ENCODE measurements at regions of chr3 and their contacts with region 1.

Region 1: DNA sequence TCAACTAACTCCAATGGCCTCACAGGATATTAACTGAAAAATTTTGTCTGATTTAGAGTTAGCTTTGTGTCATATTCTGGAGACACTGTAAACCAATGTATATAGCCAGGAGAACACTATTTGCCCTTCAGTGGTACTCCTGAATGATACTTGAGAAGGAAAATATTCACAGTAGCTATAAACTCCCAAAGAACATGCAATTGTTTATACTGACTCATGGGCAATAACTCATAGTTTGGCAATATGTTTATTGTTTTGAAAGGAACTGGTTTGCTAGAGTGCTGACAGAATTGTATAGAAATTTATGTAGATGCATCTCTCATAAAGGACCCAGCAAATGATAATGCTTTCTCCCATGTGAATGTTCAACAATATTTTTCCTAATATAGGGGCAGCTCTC is 537.6 kb downstream of the PLOD2 start:
- DNase-seq: no peak
- ATAC-seq: no peak
- H3K4me3 ChIP-seq: no peak overlapping the region
- H3K4me3 Mint-ChIP-seq: no peak overlapping the region
- H3K27ac ChIP-seq: no peak overlapping the region
- H3K27ac Mint-ChIP-seq: no peak overlapping the region
- H3K4me1 ChIP-seq: no peaks in the 10 kb centered on the region
- H3K4me1 Mint-ChIP-seq: no peaks in the 10 kb centered on the region
- H3K27me3 ChIP-seq: no peaks in the 10 kb centered on the region
- H3K27me3 Mint-ChIP-seq: no peaks in the 10 kb centered on the region
- CTCF ChIP-seq: no peak

Region 2: DNA sequence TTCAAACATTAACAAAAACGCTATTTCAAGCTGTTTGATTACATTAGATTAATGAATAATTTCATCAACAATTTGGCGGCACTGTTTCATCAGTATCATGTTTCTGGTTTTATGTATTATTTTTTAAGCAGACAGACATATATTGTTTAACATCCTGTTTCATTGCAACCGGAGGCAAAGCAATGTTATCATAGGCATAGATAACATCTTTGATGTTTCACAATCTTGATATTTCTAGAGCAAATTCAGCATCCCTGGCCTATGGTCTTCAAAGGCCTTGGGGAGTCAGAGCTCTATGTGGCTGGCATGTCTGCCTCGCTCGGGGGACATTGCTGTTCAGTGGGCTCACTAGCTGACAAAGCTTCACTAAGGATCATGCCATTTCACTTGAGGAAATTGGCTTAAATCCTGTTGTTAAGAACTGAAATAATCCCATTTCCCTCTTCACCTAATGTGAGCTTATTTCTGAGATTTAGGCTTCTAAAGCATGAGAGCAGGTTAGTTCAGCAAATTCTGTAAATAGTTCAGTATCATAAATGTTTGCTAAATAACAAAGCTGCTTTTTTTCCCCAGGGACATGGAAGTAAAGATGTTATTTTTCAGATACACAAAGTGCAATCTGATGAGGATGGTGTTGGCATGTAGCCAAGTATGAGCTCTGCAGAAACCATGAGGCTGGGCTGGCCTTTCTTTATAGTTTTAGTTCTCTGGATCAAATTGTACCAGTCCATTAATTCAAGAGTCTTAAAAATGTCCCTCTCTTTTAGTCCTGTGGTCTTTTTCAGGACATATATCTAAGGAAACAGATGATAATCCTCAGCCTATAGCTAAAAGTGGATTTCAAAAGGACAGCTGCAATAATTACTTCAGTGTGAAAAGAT is 403.8 kb before region 1 on chr3:
- CTCF ChIA-PET with region 1: no interaction called
- POLR2A ChIA-PET with region 1: no interaction called
- intact Hi-C with region 1: loop called in 1 of 2 experiments (anchors 5 kb)
- DNase-seq: no peak
- ATAC-seq: no peak
- H3K4me3 ChIP-seq: no peak overlapping the region
- H3K4me3 Mint-ChIP-seq: no peak overlapping the region
- H3K27ac ChIP-seq: no peak overlapping the region
- H3K27ac Mint-ChIP-seq: no peak overlapping the region
- H3K4me1 ChIP-seq: no peaks in the 10 kb centered on the region
- H3K4me1 Mint-ChIP-seq: no peaks in the 10 kb centered on the region
- H3K27me3 ChIP-seq: no peaks in the 10 kb centered on the region
- H3K27me3 Mint-ChIP-seq: no peaks in the 10 kb centered on the region
- CTCF ChIP-seq: no peak

Region 3: GRCh38 chr3:145900056-145900829 is 276.9 kb after region 1 on chr3:
- CTCF ChIA-PET with region 1: no interaction called
- POLR2A ChIA-PET with region 1: no interaction called
- intact Hi-C with region 1: no loop called
- DNase-seq: no peak
- ATAC-seq: no peak
- H3K4me3 ChIP-seq: no peak overlapping the region
- H3K4me3 Mint-ChIP-seq: no peak overlapping the region
- H3K27ac ChIP-seq: no peak overlapping the region
- H3K27ac Mint-ChIP-seq: no peak overlapping the region
- H3K4me1 ChIP-seq: no peaks in the 10 kb centered on the region
- H3K4me1 Mint-ChIP-seq: no peaks in the 10 kb centered on the region
- H3K27me3 ChIP-seq: no peaks in the 10 kb centered on the region
- H3K27me3 Mint-ChIP-seq: no peaks in the 10 kb centered on the region
- CTCF ChIP-seq: no peak